Natural killer cell (primary cell): ENCODE measurements at regions of chrX and their contacts with region 1.

Region 1: GRCh38 chrX:16445166-16445752 is 204.7 kb upstream of the S100G start:
- DNase-seq: peak; percentile 15 to 62
- ATAC-seq: peak; percentile 50 to 84 (median 64)
- H3K4me3 ChIP-seq: no peak overlapping the region
- H3K4me3 Mint-ChIP-seq: no peak overlapping the region
- H3K27ac ChIP-seq: no peak overlapping the region
- H3K27ac Mint-ChIP-seq: no peak overlapping the region
- H3K4me1 ChIP-seq: no peaks in the 10 kb centered on the region
- H3K4me1 Mint-ChIP-seq: no peaks in the 10 kb centered on the region
- H3K27me3 ChIP-seq: no peaks in the 10 kb centered on the region
- H3K27me3 Mint-ChIP-seq: peaks cover 3 to 17% of the 10 kb centered on the region in 2 donors
- CTCF ChIP-seq: peak; percentile 52

Region 2: DNA sequence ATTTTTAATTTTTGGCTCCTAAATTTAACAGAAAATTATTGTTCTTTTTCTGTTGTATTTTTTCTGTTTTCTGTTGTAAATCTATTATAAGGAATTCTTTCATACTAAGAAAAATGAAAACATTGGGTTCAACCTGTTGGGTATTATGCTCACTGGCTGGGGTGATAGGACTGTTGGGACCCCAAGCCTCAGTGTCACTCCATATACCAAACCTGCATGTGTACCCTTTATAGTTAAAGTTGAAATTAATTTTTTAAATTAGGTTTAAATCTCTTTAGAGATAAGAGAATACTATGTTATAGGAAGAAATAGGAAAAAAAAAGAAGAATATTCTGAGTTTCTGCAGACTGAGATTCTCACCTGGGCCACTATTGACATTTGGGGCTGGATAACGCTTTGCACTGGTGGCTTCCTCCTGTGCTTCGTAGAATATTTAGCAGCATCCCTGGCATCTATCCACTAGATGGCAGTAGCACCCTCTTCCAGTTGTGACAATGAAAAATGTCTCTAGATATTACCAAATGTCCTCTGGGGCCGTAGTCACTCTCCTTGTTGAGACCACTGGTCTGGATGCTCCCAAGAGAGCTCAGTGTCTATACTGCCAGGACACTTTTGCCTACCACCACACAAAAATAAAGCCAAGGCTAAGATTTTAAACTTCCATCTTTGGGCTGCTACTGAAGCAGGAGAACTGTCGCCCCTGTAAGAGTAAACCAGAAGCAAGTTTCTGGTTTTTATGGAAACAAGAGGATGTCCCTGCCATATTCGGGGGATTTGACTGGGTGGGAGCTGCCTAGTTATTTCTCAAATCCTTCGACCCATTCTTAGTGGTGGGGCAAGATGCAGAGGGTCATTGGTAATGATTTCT is 758.2 kb before region 1 on chrX:
- intact Hi-C with region 1: loop called (anchors 5 kb)
- DNase-seq: peak; percentile 37 to 82
- ATAC-seq: peak; percentile 88 to 97 (median 96)
- H3K4me3 ChIP-seq: no peak overlapping the region
- H3K4me3 Mint-ChIP-seq: no peak overlapping the region
- H3K27ac ChIP-seq: no peak overlapping the region
- H3K27ac Mint-ChIP-seq: no peak overlapping the region
- H3K4me1 ChIP-seq: peaks cover 6% of the 10 kb centered on the region
- H3K4me1 Mint-ChIP-seq: peaks cover 0 to 6% of the 10 kb centered on the region in 2 donors
- H3K27me3 ChIP-seq: no peaks in the 10 kb centered on the region
- H3K27me3 Mint-ChIP-seq: no peaks in the 10 kb centered on the region
- CTCF ChIP-seq: peak; percentile 60

Region 3: DNA sequence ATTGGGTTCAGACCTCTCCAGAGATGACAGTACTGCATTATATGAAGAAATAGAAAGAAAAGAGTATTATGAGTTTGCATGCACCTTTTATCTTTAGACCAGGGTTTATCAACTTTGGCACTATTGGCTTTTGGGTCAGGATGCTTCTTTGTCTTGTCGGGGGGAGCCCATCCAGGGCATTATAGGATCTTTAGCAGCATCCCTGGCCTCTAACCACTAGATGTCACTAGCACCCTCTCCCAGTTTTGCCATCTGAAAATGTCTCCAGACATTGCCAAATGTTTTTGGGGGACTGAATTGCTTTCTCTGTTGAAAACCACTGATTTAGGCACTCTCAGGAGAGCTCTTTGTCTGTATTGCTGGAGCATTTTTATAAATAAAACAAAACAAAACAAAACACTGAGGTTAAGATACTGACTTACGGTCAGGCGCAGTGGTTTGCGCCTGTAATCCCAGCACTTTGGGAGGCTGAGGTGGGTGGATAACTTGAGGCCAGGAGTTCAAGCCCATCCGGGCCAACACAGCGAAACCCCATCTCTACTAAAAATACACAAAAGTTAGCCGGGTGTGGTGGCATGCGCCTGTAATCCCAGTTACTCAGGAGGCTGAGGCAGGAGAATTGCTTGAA is 683.6 kb before region 1 on chrX:
- intact Hi-C with region 1: loop called (anchors 10 kb)
- DNase-seq: peak in 1 of 2 donors; percentile 67
- ATAC-seq: peak; percentile 46 to 69 (median 57)
- H3K4me3 ChIP-seq: no peak overlapping the region
- H3K4me3 Mint-ChIP-seq: no peak overlapping the region
- H3K27ac ChIP-seq: no peak overlapping the region
- H3K27ac Mint-ChIP-seq: peak overlapping the region; percentile 71 to 85
- H3K4me1 ChIP-seq: peaks cover 26% of the 10 kb centered on the region
- H3K4me1 Mint-ChIP-seq: peaks cover 37 to 51% of the 10 kb centered on the region in 2 donors
- H3K27me3 ChIP-seq: no peaks in the 10 kb centered on the region
- H3K27me3 Mint-ChIP-seq: no peaks in the 10 kb centered on the region
- CTCF ChIP-seq: peak; percentile 41

Region 4: GRCh38 chrX:16123222-16123786 is 322.0 kb before region 1 on chrX and contains the start of gene GRPR:
- intact Hi-C with region 1: loop called (anchors 10 kb)
- DNase-seq: peak; percentile 21 to 68
- ATAC-seq: peak; percentile 82 to 98 (median 86)
- H3K4me3 ChIP-seq: no peak within 1 kb of the TSS
- H3K4me3 Mint-ChIP-seq: no peak within 1 kb of the TSS
- H3K27ac ChIP-seq: no peak within 1 kb of the TSS
- H3K27ac Mint-ChIP-seq: no peak within 1 kb of the TSS
- H3K4me1 ChIP-seq: no peaks in the 10 kb centered on the region
- H3K4me1 Mint-ChIP-seq: peaks cover 5% of the 10 kb centered on the region in 2 donors
- H3K27me3 ChIP-seq: no peaks in the 10 kb centered on the region
- H3K27me3 Mint-ChIP-seq: peaks cover 8 to 43% of the 10 kb centered on the region in 2 donors
- CTCF ChIP-seq: peak; percentile 51
- total RNA-seq, gene GRPR: 0.36 TPM in 1 of 3 donors, not detected in the others